Heart right ventricle (tissue), 16 donors: ENCODE measurements at regions of chr12 and their contacts with region 1.

Region 1: GRCh38 chr12:14629832-14630710 is 62.4 kb upstream of the PLBD1 start:
- DNase-seq: peak; percentile 26 to 64
- ATAC-seq: peak; percentile 80 to 99 (median 94)
- H3K4me3 ChIP-seq: no peak overlapping the region
- H3K27ac ChIP-seq: no peak overlapping the region
- H3K4me1 ChIP-seq: peaks cover 0 to 7% (median 0%) of the 10 kb centered on the region in 9 donors
- H3K27me3 ChIP-seq: no peaks in the 10 kb centered on the region
- CTCF ChIP-seq: peak; percentile 81 to 98 (median 94)

Region 2: DNA sequence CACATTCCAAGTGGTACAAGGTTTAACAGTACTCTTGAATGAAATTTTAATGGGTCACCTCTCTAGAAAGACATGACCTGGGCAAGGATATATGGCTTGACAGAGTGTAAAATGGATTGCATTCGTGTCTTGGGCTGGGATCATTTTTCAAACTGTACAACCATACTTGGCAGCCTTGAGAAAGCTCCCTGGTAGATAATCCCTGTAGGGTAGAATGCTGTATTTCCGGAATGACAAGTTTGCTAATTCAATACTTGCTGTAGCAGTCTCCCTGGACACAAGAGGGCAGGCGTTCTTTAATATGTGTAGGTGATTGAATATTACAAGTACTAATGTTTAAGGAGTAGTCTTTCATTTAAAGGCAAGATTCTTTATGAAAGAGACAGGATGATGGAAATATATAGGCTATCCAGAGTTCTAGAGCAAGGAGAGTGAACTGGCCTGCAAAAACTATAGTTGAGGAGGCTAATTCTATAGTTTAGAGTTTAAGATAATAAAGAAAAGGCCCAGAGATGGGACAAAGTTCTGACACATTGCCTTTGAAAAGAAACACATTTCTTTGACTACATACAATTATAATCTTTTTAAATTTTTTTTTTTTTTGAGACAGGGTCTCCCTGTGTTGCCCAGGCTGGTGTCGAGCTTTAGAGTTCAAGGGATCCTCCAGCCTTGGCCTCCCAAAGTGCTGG is 115.8 kb before region 1 on chr12:
- intact Hi-C with region 1: loop called in 1 of 10 experiments (anchors 10 kb)
- DNase-seq: peak in 1 of 2 donors; percentile 38
- ATAC-seq: peak in 6 of 8 donors; percentile 34 to 75 (median 52)
- H3K4me3 ChIP-seq: no peak overlapping the region
- H3K27ac ChIP-seq: no peak overlapping the region
- H3K4me1 ChIP-seq: no peaks in the 10 kb centered on the region
- H3K27me3 ChIP-seq: no peaks in the 10 kb centered on the region
- CTCF ChIP-seq: peak in 8 of 9 donors; percentile 26 to 64 (median 51)

Region 3: GRCh38 chr12:14664510-14664909 is 34.4 kb after region 1 on chr12:
- intact Hi-C with region 1: loop called in 5 of 10 experiments (anchors 2 to 5 kb)
- DNase-seq: peak in 1 of 2 donors; percentile 39
- ATAC-seq: peak in 3 of 8 donors; percentile 16 to 55 (median 41)
- H3K4me3 ChIP-seq: no peak overlapping the region
- H3K27ac ChIP-seq: no peak overlapping the region
- H3K4me1 ChIP-seq: peaks cover 0 to 4% (median 0%) of the 10 kb centered on the region in 9 donors
- H3K27me3 ChIP-seq: no peaks in the 10 kb centered on the region
- CTCF ChIP-seq: peak; percentile 38 to 79 (median 68)

Region 4: DNA sequence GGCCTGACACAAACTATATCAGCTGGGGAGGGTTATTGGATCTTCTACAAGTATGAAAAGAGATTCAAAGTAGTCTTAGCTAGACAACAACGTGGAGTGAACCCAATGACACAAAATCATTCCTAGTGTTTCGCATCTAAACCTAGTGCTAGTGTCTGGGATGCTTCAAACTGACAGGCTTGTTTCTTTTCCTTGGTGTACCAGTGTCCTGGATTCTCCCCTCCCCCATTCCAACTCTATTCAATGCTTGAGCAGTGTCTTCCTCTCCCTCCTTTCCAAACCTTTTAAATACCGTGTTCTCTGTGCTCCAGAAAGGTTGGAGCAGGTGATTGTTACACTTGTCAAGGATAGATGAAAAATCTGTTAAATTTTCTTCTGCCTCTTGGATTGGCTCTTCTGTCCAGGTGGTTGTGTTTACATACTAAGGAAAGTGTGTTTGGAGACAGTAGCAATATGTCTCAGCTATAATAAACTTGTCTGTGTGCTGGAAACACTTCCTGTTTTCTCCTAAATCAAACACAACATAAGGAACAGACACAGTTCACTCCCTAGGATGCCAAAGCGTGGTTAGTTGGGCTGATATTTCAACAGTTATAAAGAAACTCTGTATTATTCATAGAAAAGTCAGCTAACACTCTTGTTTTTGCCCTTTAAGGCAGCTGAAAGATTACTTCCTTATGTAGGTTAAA is 80.7 kb after region 1 on chr12:
- intact Hi-C with region 1: loop called in 5 of 10 experiments (anchors 5 to 10 kb)
- DNase-seq: no peak
- ATAC-seq: no peak
- H3K4me3 ChIP-seq: no peak overlapping the region
- H3K27ac ChIP-seq: no peak overlapping the region
- H3K4me1 ChIP-seq: no peaks in the 10 kb centered on the region
- H3K27me3 ChIP-seq: peaks cover 0 to 4% (median 0%) of the 10 kb centered on the region in 7 donors
- CTCF ChIP-seq: no peak

Region 5: GRCh38 chr12:14716848-14717444 is 86.9 kb after region 1 on chr12:
- intact Hi-C with region 1: loop called in 5 of 10 experiments (anchors 5 to 10 kb)
- DNase-seq: peak in 1 of 2 donors; percentile 18
- ATAC-seq: peak in 2 of 8 donors; percentile 41 to 62
- H3K4me3 ChIP-seq: no peak overlapping the region
- H3K27ac ChIP-seq: no peak overlapping the region
- H3K4me1 ChIP-seq: no peaks in the 10 kb centered on the region
- H3K27me3 ChIP-seq: no peaks in the 10 kb centered on the region
- CTCF ChIP-seq: peak; percentile 17 to 67 (median 56)

Region 6: GRCh38 chr12:14995583-14996425 is 365.7 kb after region 1 on chr12:
- intact Hi-C with region 1: loop called in 3 of 10 experiments (anchors 5 to 10 kb)
- DNase-seq: no peak
- ATAC-seq: peak in 5 of 8 donors; percentile 16 to 67 (median 60)
- H3K4me3 ChIP-seq: no peak overlapping the region
- H3K27ac ChIP-seq: peak overlapping the region in 1 of 10 donors; percentile 23
- H3K4me1 ChIP-seq: peaks cover 0 to 25% (median 4%) of the 10 kb centered on the region in 9 donors
- H3K27me3 ChIP-seq: no peaks in the 10 kb centered on the region
- CTCF ChIP-seq: peak; percentile 64 to 85 (median 74)